ENCODE measurements at regions of chr14 and their contacts with region 1.

Region 1: DNA sequence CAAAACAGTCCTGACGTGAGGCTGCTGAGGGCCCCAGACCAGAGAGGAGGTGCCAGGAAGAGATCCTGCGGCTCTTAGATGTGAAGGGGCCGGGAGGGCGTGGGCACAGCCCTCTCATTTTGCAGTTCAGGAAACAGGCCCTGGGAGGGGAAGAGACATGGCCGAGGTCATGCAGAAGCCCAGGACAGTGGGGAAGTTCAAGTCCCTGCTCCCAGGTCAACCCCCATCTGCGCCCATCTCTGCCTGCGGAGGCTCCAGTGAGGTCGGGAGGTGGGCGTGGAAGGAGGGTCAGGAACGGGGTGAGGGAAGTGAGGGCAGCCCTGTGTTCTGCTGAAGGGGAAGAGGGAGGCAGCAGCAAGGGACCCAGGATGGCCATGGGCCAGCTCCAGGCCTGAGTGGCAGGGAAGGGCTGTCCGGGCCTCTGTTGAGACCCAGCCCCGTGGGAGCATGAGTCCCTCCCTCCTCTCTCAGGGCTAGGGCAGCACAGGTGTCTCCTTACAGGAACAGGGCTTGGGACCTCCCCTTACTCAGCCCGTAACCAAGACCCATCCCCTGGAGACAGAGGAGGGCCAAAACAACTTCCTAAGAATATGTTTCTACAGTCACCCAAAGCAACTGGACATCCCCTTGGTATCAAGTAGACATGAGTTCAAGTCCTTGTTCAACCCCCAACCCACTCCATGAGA is 90.8 kb downstream of the LGMN start:
- DNase-seq: no peak
- H3K4me3 Mint-ChIP-seq: peak overlapping the region; percentile 38
- H3K27ac Mint-ChIP-seq: peak overlapping the region; percentile 69
- H3K4me1 Mint-ChIP-seq: peaks cover 81% of the 10 kb centered on the region
- H3K27me3 Mint-ChIP-seq: no peaks in the 10 kb centered on the region

Region 2: GRCh38 chr14:92668276-92668973 is 10.8 kb after region 1 on chr14:
- CTCF ChIA-PET with region 1: interaction called, 14 read pairs
- intact Hi-C with region 1: loop called (anchors 1 kb)
- DNase-seq: no peak
- H3K4me3 Mint-ChIP-seq: no peak overlapping the region
- H3K27ac Mint-ChIP-seq: peak overlapping the region; percentile 79
- H3K4me1 Mint-ChIP-seq: peaks cover 77% of the 10 kb centered on the region
- H3K27me3 Mint-ChIP-seq: no peaks in the 10 kb centered on the region

Region 3: DNA sequence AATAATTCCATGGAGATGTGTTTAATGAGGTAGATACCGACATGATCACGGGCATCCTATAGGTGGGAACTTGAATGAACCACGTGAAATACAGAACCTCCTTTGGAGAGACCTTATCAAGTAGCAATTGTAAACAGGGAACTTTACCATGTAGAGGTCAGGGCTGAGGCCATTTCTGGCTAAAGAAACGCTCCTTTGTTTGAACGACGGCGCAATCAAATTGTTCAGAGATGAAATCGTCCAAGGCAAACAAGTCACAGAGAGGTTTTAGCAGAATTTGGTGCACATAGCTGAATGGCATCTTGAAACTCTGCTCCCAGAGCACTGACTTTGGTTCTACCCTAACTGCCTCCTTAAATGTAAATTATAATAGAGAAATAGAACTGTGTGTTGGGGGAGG is 1120.9 kb after region 1 on chr14:
- CTCF ChIA-PET with region 1: no interaction called
- intact Hi-C with region 1: no loop called
- DNase-seq: no peak
- H3K4me3 Mint-ChIP-seq: no peak overlapping the region
- H3K27ac Mint-ChIP-seq: no peak overlapping the region
- H3K4me1 Mint-ChIP-seq: no peaks in the 10 kb centered on the region
- H3K27me3 Mint-ChIP-seq: no peaks in the 10 kb centered on the region

Measured in activated naive CD4-positive, alpha-beta T cell treated with anti-CD3 and anti-CD28 coated beads for 36 hours (primary cell).